Activated naive CD4-positive, alpha-beta T cell treated with anti-CD3 and anti-CD28 coated beads for 36 hours (primary cell): ENCODE measurements at regions of chr9 and their contacts with region 1.

Region 1: GRCh38 chr9:132249123-132249522 is 87.3 kb downstream of the NTNG2 start:
- DNase-seq: no peak
- H3K4me3 Mint-ChIP-seq: no peak overlapping the region
- H3K27ac Mint-ChIP-seq: no peak overlapping the region
- H3K4me1 Mint-ChIP-seq: no peaks in the 10 kb centered on the region
- H3K27me3 Mint-ChIP-seq: no peaks in the 10 kb centered on the region

Region 2: GRCh38 chr9:131755541-131756198 is 493.5 kb before region 1 on chr9:
- CTCF ChIA-PET with region 1: interaction called, 16 read pairs
- intact Hi-C with region 1: loop called (anchors 1 kb)
- DNase-seq: peak; percentile 94
- H3K4me3 Mint-ChIP-seq: no peak overlapping the region
- H3K27ac Mint-ChIP-seq: no peak overlapping the region
- H3K4me1 Mint-ChIP-seq: peaks cover 13% of the 10 kb centered on the region
- H3K27me3 Mint-ChIP-seq: no peaks in the 10 kb centered on the region

Region 3: DNA sequence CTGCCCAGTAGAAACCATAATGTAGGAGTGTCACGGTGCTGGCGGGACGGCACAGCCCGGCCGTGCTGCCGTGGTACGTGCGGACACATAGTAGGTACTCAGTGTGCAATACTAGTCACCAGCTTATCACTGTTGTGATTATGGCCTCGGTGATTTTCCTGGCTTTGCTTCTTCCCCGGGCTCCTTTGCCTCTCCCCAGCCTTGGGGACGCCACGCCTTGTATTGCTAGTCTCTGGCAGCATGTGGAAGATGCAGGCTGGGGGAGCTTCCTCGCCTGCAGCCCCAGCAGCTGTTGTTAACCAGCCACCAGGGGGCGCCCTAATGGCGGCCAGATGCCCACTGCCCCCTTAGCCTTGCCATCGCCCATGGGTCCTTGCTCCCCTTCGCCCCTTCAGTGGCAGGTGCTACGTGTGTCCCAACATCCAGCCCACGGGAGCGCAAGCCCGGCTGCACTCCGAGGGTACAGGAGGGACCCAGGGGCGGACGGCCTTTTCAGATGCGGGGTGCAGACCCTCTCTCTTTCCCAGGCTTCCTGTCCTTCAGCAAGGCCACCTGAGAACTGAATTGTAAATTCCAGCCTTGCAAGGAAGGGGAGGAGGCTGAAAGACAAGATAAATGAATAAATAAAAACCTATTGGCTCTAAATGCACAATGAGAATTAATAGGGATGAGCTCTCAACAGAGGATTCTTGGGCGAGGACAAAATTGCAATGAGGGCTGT is 79.3 kb before region 1 on chr9:
- CTCF ChIA-PET with region 1: interaction called, 15 read pairs
- intact Hi-C with region 1: no loop called
- DNase-seq: peak; percentile 59
- H3K4me3 Mint-ChIP-seq: no peak overlapping the region
- H3K27ac Mint-ChIP-seq: no peak overlapping the region
- H3K4me1 Mint-ChIP-seq: no peaks in the 10 kb centered on the region
- H3K27me3 Mint-ChIP-seq: peaks cover 44% of the 10 kb centered on the region